Ascending aorta (tissue), 2 donors: ENCODE measurements at regions of chr1 and their contacts with region 1.

Region 1: GRCh38 chr1:167797015-167797414 is 75.2 kb downstream of the MPZL1 start:
- DNase-seq: peak; percentile 68 to 95
- H3K4me3 ChIP-seq: peak overlapping the region; percentile 9 to 24
- H3K27ac ChIP-seq: peak overlapping the region; percentile 71 to 77
- H3K4me1 ChIP-seq: peaks cover 0 to 22% of the 10 kb centered on the region in 2 donors
- H3K27me3 ChIP-seq: no peaks in the 10 kb centered on the region
- CTCF ChIP-seq: no peak

Region 2: DNA sequence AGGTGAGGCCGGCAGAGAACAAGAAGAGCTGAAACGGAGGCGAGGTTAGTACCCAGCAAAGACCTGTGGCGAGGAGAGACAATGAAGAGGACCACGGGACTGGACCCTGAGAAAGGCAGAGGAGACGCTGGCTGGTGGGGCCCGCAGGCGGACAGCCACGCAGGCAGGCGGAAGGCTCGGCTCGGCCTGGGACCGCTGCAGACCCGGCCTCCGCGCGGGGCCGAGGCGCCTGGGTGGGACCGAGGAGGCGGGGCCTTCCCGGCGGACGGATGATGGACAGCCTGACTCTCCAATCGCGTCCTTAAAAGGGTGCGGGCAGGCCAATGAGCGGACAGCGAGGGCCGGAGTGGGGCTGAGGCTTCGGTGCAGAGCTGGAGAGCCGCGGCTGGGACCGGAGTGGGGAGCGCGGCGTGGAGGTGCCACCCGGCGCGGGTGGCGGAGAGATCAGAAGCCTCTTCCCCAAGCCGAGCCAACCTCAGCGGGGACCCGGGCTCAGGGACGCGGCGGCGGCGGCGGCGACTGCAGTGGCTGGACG is 75.3 kb before region 1 on chr1 and contains the start of gene MPZL1:
- intact Hi-C with region 1: loop called (anchors 1 kb)
- DNase-seq: peak; percentile 71 to 98
- H3K4me3 ChIP-seq: peak within 1 kb of the TSS; percentile 86 to 98
- H3K27ac ChIP-seq: peak within 1 kb of the TSS; percentile 89 to 94
- H3K4me1 ChIP-seq: peaks cover 3 to 25% of the 10 kb centered on the region in 2 donors
- H3K27me3 ChIP-seq: no peaks in the 10 kb centered on the region
- CTCF ChIP-seq: no peak
- total RNA-seq, gene MPZL1: 58.9 TPM